RWPE1 (cell line): ENCODE measurements at regions of chr9 and their contacts with region 1.

Region 1: GRCh38 chr9:114108016-114108833 is 9.1 kb upstream of the KIF12 start:
- DNase-seq: peak; percentile 94
- H3K27ac ChIP-seq: no peak overlapping the region
- CTCF ChIP-seq: peak; percentile 99

Region 2: GRCh38 chr9:114059047-114059803 is 49.0 kb before region 1 on chr9:
- CTCF ChIA-PET with region 1: no interaction called
- POLR2A ChIA-PET with region 1: no interaction called
- DNase-seq: no peak
- H3K27ac ChIP-seq: no peak overlapping the region
- CTCF ChIP-seq: no peak

Region 3: GRCh38 chr9:114082017-114082762 is 26.0 kb before region 1 on chr9:
- CTCF ChIA-PET with region 1: interaction called, 46 read pairs
- POLR2A ChIA-PET with region 1: no interaction called
- DNase-seq: peak; percentile 95
- H3K27ac ChIP-seq: no peak overlapping the region
- CTCF ChIP-seq: peak; percentile 98

Region 4: GRCh38 chr9:114123031-114123977 is 15.1 kb after region 1 on chr9:
- CTCF ChIA-PET with region 1: interaction called, 17 read pairs
- POLR2A ChIA-PET with region 1: interaction called, 3 read pairs
- DNase-seq: no peak
- H3K27ac ChIP-seq: no peak overlapping the region
- CTCF ChIP-seq: no peak

Region 5: DNA sequence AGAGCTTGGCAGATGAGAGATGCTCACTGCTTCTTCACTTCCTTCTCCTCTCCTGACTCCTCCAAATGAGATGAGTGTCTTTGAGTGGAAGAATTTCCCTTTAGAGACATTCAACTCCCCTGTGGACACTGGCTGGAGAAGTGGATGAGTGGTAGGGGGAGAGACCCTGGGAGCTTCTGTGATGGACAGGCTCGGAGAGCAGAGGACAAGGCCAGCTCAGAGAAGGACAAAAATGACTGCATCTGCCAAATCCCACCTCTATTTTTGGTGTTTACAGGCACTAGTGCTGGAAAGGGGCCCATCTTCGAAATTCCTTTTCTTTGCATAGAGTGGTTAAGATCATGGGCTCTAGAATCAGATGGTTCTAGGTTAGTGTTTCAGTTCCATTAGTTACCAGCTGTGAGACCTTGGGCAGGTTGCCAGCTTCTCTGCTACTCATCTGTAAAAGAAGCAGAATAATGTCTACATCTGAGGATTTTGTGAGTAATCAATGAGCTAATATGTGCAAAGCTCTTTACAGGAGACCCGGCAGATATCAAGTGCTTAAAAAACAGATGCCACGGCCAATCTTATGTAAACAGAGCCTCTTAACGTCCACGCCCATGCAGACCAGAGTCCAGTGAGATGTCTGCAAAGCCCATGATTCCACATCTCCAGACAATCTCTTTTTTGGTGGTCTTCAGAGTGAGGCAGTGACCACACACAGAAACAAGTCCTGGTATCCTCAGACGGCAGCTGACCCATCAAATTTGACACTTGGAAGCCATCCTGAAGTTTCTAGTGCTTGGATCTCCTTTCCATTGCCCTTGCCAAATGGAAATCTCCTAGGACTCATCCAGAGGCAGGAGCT is 33.6 kb after region 1 on chr9:
- CTCF ChIA-PET with region 1: interaction called, 10 read pairs
- POLR2A ChIA-PET with region 1: no interaction called
- DNase-seq: no peak
- H3K27ac ChIP-seq: no peak overlapping the region
- CTCF ChIP-seq: no peak

Region 6: GRCh38 chr9:114155263-114155972 is 47.2 kb after region 1 on chr9 and contains the start of gene COL27A1:
- CTCF ChIA-PET with region 1: interaction called, 57 read pairs
- POLR2A ChIA-PET with region 1: no interaction called
- DNase-seq: peak; percentile 96
- H3K27ac ChIP-seq: peak within 1 kb of the TSS; percentile 64
- CTCF ChIP-seq: peak; percentile 100

Region 7: DNA sequence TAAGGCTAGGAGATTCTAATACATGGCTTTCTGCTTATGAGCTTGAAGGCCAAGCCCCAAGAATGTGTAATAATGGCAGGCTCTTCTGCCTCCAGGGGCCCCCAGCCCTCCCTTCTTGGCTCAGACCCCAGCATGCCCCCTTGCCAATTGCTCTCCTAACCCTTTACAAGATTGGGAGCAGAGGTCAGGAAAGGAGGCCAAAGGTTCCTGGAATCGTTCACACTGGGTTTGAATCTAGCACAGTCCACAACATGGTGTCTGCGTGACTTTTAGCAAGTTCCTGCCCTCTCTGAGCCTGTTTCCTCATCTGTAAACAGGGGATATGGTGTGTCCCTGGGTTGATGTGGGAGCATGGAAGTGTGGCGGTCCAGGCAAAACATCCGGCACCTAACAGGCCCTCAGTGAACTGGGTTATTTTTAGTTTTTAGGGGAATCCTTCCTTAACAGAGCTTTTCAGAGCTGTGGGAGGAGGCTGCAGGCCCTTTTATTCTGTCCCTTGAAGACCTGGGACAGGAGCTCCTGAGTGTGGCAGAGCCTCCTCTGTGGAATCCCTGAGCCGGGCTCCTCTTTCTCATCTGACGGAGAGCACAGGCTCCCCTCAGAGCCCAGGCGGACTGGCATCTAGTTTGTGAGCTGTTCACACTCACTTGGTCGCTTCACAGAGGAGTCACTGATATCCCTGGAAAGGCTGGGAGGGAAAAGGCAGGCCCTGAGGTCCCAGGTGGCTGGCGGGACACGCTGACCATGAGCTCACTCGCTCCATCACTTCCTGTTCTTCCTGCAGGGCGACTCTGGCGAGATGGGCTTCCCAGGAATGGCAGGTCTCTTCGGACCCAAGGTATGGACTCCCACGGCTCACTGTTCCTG is 191.3 kb after region 1 on chr9:
- CTCF ChIA-PET with region 1: interaction called, 15 read pairs
- POLR2A ChIA-PET with region 1: no interaction called
- DNase-seq: no peak
- H3K27ac ChIP-seq: no peak overlapping the region
- CTCF ChIP-seq: no peak

Region 8: GRCh38 chr9:114308411-114308811 is 200.2 kb after region 1 on chr9:
- CTCF ChIA-PET with region 1: interaction called, 13 read pairs
- POLR2A ChIA-PET with region 1: no interaction called
- DNase-seq: no peak
- H3K27ac ChIP-seq: no peak overlapping the region
- CTCF ChIP-seq: no peak